Endothelial cell of umbilical vein (primary cell): ENCODE measurements at regions of chr1 and their contacts with region 1.

Region 1: DNA sequence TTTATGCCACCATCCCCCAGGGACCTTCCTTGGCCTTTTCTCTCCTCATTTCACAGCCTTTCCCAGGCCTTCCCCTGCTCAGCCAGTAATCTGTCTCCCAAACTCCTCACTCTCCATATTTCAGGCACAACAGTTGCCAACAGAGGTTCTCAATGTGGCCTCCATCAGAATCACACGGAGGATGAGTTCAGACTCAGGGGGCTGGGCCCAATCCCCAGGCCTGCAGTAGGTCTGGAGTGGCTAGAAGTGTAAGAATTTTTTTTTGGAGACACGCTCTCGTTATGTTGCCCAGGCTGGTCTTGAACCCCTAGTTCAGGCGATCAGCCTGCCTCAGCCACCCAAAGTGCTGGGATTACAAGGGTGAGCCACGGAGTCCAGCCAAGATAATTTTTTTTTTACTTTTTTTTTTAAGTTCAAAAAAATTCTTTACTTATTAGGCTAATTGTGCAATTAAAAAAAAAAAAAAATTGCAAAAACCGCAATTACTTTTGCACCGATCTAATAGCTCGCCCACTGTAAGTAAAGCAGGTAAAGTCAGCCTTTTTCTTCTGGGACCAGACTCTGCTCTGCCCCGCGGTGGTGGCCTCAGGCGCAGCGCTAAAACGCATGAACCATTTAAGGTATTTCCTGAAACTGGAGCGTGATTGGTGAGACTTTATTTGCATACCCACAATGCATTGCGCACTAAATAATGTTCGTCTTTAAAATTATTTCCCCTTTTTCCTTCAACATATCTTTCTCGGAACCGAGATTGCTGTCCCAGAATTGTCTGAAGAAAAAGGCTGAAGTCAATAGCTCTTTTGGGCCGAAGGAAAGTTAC is 18.7 kb downstream of the KIAA2013 start:
- DNase-seq: peak; percentile 97
- H3K4me3 ChIP-seq: no peak overlapping the region
- H3K27ac ChIP-seq: peak overlapping the region; percentile 100
- H3K4me1 ChIP-seq: peaks cover 3% of the 10 kb centered on the region
- H3K27me3 ChIP-seq: no peaks in the 10 kb centered on the region
- CTCF ChIP-seq: peak; percentile 50 to 89
- POLR2A ChIP-seq: no peak

Region 2: DNA sequence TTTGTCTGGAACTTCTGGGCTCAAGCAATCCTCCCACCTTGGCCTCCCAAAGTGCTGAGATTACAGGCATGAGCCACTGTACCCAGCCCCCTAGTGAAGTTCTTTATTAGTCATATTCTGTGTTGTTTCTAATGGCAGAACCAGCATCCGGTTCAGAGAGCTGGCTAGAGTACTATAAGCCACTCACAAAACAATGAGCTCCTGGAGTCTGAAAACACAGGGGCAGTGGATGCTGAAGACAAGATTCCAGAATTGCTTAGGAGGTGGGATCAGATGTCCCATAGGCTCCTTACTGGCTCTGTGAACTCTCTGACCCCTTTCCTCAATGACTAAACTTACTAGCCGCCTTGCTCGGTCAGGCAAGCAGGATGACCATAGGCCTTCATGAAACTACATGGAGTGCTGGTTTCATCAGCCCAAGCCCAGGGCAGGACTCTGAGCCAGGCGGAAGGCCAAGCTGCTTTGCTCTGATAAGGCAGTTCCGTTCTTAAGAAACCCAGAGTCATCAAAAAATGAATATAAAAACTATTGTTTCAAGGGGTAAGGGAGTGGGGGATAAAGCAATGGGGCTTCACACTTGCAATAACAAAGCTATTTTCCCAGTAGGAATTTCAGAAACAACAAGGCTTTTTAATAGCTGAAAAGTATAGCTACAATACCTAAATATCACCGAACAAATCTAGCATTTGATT is 109.8 kb before region 1 on chr1:
- CTCF ChIA-PET with region 1: no interaction called
- POLR2A ChIA-PET with region 1: interaction called, 18 read pairs
- dilution Hi-C with region 1: no loop called
- intact Hi-C with region 1: loop called (anchors 2 kb)
- DNase-seq: peak; percentile 99
- H3K4me3 ChIP-seq: peak overlapping the region in 1 of 3 experiments; percentile 12
- H3K27ac ChIP-seq: peak overlapping the region; percentile 96
- H3K4me1 ChIP-seq: peaks cover 33% of the 10 kb centered on the region
- H3K27me3 ChIP-seq: no peaks in the 10 kb centered on the region
- CTCF ChIP-seq: no peak
- POLR2A ChIP-seq: no peak

Region 3: GRCh38 chr1:11838349-11839272 is 68.9 kb before region 1 on chr1:
- CTCF ChIA-PET with region 1: interaction called, 20 read pairs
- POLR2A ChIA-PET with region 1: interaction called, 16 read pairs
- dilution Hi-C with region 1: no loop called
- intact Hi-C with region 1: loop called (anchors 1 kb)
- DNase-seq: peak; percentile 51
- H3K4me3 ChIP-seq: no peak overlapping the region
- H3K27ac ChIP-seq: no peak overlapping the region
- H3K4me1 ChIP-seq: peaks cover 7% of the 10 kb centered on the region
- H3K27me3 ChIP-seq: no peaks in the 10 kb centered on the region
- CTCF ChIP-seq: peak; percentile 97 to 100
- POLR2A ChIP-seq: no peak

Region 4: GRCh38 chr1:11925938-11926292 is 18.4 kb after region 1 on chr1:
- CTCF ChIA-PET with region 1: no interaction called
- POLR2A ChIA-PET with region 1: interaction called, 46 read pairs
- dilution Hi-C with region 1: no loop called
- intact Hi-C with region 1: loop called (anchors 1 kb)
- DNase-seq: no peak
- H3K4me3 ChIP-seq: peak overlapping the region; percentile 20 to 56 (median 26)
- H3K27ac ChIP-seq: no peak overlapping the region
- H3K4me1 ChIP-seq: peaks cover 34% of the 10 kb centered on the region
- H3K27me3 ChIP-seq: no peaks in the 10 kb centered on the region
- CTCF ChIP-seq: no peak
- POLR2A ChIP-seq: no peak

Region 5: DNA sequence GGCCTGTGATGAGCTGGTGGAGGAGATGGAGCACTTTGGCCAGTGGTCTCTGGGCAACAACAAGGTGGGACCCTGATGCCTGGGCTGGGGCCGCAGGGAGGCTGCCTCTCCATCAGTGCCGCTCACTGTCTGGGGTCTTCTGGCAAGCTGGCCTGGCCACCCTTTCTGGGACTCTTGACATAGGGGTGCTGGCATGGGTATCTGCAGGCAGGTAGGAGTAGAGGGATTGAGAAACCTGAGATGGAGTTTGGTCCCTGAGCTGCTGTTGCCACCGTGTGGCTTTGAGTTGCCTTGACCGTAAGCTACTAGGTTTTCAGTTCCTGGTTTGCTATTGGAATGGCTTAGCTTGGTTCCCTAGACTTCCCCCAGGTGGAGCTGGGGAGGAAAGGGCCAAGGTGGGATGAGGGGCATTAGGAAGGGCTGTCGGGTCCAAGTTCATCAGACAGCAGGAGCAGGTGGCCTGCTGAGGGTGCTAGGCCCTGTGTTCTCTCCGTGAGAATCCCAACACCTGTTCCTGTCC is 59.6 kb after region 1 on chr1:
- CTCF ChIA-PET with region 1: interaction called, 13 read pairs
- POLR2A ChIA-PET with region 1: interaction called, 40 read pairs
- dilution Hi-C with region 1: no loop called
- intact Hi-C with region 1: loop called (anchors 1 kb)
- DNase-seq: peak; percentile 37
- H3K4me3 ChIP-seq: no peak overlapping the region
- H3K27ac ChIP-seq: no peak overlapping the region
- H3K4me1 ChIP-seq: no peaks in the 10 kb centered on the region
- H3K27me3 ChIP-seq: no peaks in the 10 kb centered on the region
- CTCF ChIP-seq: peak; percentile 25 to 50
- POLR2A ChIP-seq: no peak

Region 6: GRCh38 chr1:12019858-12020509 is 112.5 kb after region 1 on chr1:
- CTCF ChIA-PET with region 1: no interaction called
- POLR2A ChIA-PET with region 1: interaction called, 22 read pairs
- dilution Hi-C with region 1: no loop called
- intact Hi-C with region 1: loop called (anchors 1 kb)
- DNase-seq: peak; percentile 30
- H3K4me3 ChIP-seq: peak overlapping the region; percentile 11 to 87 (median 70)
- H3K27ac ChIP-seq: no peak overlapping the region
- H3K4me1 ChIP-seq: no peaks in the 10 kb centered on the region
- H3K27me3 ChIP-seq: no peaks in the 10 kb centered on the region
- CTCF ChIP-seq: no peak
- POLR2A ChIP-seq: no peak

Region 7: DNA sequence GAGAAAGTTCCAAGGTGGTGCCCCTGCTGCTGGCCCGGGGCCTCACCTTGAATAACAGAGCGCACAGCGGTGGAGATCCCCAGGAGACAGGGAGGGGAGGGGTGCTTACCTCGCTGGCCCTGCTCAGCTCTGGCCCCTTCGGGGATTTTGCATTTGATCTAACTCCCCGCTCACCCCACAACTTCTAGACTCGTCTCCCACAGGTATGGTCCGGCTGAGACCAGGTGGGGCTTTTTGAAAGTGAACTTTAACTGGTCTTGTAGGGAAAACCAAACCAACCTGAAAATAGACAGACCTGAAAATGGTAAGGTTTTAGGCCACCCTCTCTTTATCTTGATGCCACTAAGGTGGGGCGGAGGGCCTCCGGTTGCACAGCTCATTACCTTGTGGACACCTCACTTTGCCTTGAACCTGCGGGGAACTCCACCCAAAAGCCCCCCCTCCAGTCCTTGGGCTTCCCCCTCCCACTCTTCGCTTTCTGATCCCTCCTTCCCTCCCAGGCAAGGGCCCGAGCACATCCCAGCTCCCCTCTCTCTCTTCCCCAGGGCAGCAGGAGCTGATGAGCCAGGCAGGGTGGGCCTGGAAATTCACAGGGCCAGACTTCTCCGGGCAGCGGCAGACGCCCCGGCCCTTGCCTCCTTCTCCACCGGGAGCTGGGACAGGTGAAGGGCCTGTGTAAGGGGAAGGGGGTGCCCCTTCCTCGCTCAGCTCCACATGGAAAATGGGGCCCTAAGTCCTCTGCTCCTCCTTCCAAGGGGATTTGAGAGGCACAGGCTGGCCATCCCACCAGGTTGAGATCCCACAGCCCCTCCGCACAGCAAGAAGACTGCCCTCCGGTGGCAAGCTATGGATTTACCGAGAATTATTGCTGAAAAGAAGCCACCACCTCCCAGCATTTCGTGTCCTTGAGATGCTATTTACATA is 171.7 kb after region 1 on chr1:
- CTCF ChIA-PET with region 1: interaction called, 3 read pairs
- POLR2A ChIA-PET with region 1: interaction called, 13 read pairs
- dilution Hi-C with region 1: no loop called
- intact Hi-C with region 1: loop called (anchors 1 kb)
- DNase-seq: peak; percentile 37
- H3K4me3 ChIP-seq: no peak overlapping the region
- H3K27ac ChIP-seq: no peak overlapping the region
- H3K4me1 ChIP-seq: no peaks in the 10 kb centered on the region
- H3K27me3 ChIP-seq: peaks cover 0 to 7% of the 10 kb centered on the region in 2 experiments
- CTCF ChIP-seq: peak; percentile 59 to 72
- POLR2A ChIP-seq: no peak